B cell (primary cell): ENCODE measurements at regions of chr3 and their contacts with region 1.

Region 1: GRCh38 chr3:196969660-196970546 is 1.3 kb upstream of the PIGZ start:
- DNase-seq: peak; percentile 83
- ATAC-seq: peak; percentile 76
- H3K4me3 ChIP-seq: peak overlapping the region; percentile 46 to 82 (median 68)
- H3K4me3 Mint-ChIP-seq: peak overlapping the region; percentile 85
- H3K27ac ChIP-seq: no peak overlapping the region
- H3K27ac Mint-ChIP-seq: peak overlapping the region; percentile 81
- H3K4me1 ChIP-seq: peaks cover 5 to 11% of the 10 kb centered on the region in 2 donors
- H3K4me1 Mint-ChIP-seq: peaks cover 19% of the 10 kb centered on the region
- H3K27me3 ChIP-seq: peaks cover 0 to 4% (median 1%) of the 10 kb centered on the region in 4 experiments
- H3K27me3 Mint-ChIP-seq: peaks cover 9% of the 10 kb centered on the region
- CTCF ChIP-seq: peak; percentile 86

Region 2: GRCh38 chr3:196632046-196632751 is 337.7 kb before region 1 on chr3:
- CTCF ChIA-PET with region 1: no interaction called
- POLR2A ChIA-PET with region 1: no interaction called
- intact Hi-C with region 1: no loop called
- DNase-seq: peak; percentile 90
- ATAC-seq: peak; percentile 82
- H3K4me3 ChIP-seq: peak overlapping the region; percentile 60 to 78 (median 70)
- H3K4me3 Mint-ChIP-seq: peak overlapping the region; percentile 92
- H3K27ac ChIP-seq: peak overlapping the region; percentile 94 to 97
- H3K27ac Mint-ChIP-seq: peak overlapping the region; percentile 96
- H3K4me1 ChIP-seq: peaks cover 29 to 49% of the 10 kb centered on the region in 2 donors
- H3K4me1 Mint-ChIP-seq: peaks cover 52% of the 10 kb centered on the region
- H3K27me3 ChIP-seq: no peaks in the 10 kb centered on the region
- H3K27me3 Mint-ChIP-seq: no peaks in the 10 kb centered on the region
- CTCF ChIP-seq: peak; percentile 29

Region 3: DNA sequence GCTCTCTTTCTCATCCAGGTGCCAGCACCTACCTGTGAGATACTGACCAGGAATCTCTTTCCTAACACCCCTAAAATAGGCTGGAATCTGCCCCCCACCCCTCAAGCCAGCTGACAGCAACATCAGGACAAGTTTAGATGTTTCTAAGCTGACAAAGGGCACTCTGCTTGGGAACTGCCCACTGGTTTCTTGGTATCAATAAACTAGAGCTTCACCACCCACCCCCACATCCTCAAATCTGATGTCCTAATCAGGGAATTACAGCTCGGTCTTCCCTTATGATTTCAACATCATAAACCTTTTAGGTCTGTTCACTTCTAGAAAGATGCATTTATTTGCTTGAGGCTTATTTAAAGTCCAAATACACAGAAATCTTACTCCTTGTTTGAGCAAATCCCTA is 292.6 kb before region 1 on chr3:
- CTCF ChIA-PET with region 1: no interaction called
- POLR2A ChIA-PET with region 1: no interaction called
- intact Hi-C with region 1: no loop called
- DNase-seq: no peak
- ATAC-seq: no peak
- H3K4me3 ChIP-seq: no peak overlapping the region
- H3K4me3 Mint-ChIP-seq: no peak overlapping the region
- H3K27ac ChIP-seq: no peak overlapping the region
- H3K27ac Mint-ChIP-seq: no peak overlapping the region
- H3K4me1 ChIP-seq: peaks cover 5 to 15% of the 10 kb centered on the region in 2 donors
- H3K4me1 Mint-ChIP-seq: peaks cover 17% of the 10 kb centered on the region
- H3K27me3 ChIP-seq: no peaks in the 10 kb centered on the region
- H3K27me3 Mint-ChIP-seq: no peaks in the 10 kb centered on the region
- CTCF ChIP-seq: no peak

Region 4: DNA sequence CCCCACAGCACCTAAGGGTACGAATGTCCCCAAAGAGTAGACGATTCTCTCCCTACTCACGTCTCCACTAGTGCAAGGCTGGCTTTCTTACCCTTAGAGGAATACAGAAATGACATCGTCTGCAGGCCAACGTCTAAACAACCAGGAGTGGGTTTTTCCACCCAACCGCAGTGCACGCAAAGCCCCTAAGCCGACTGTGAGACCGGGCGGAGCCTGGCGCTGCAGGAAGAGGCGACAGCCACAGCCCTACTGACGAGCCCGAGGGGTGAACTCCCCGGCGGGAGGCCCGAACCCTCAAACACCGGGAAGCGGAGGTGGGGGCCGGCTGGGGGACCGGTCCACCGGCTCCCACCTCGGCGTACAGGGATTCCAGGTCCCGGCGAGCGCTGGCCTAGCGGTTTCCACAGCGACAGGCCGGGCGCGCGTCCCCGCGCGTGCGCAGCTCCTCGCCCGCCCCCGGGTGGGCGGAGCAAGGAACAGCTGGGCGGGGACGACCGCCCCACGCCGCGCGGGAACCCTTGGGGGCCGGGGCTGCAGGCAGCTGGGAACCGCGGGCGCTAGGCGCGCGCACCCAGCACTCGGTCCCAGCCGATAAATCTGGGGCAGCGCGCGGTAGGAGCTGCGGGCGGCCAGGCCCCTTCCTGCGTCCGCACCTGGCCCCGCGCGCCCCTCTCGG is 257.9 kb before region 1 on chr3 and contains the starts of genes CEP19 and PIGX:
- CTCF ChIA-PET with region 1: no interaction called
- POLR2A ChIA-PET with region 1: no interaction called
- intact Hi-C with region 1: loop called (anchors 1 kb)
- DNase-seq: peak; percentile 97
- ATAC-seq: peak; percentile 83
- H3K4me3 ChIP-seq: peak within 1 kb of the TSS; percentile 75 to 94 (median 87)
- H3K4me3 Mint-ChIP-seq: peak within 1 kb of the TSS; percentile 96
- H3K27ac ChIP-seq: peak within 1 kb of the TSS; percentile 91 to 96
- H3K27ac Mint-ChIP-seq: peak within 1 kb of the TSS; percentile 94
- H3K4me1 ChIP-seq: peaks cover 13 to 16% of the 10 kb centered on the region in 2 donors
- H3K4me1 Mint-ChIP-seq: peaks cover 14% of the 10 kb centered on the region
- H3K27me3 ChIP-seq: no peaks in the 10 kb centered on the region
- H3K27me3 Mint-ChIP-seq: no peaks in the 10 kb centered on the region
- CTCF ChIP-seq: no peak
- total RNA-seq, gene CEP19: 4.6 and 5.0 TPM in 2 replicates
- total RNA-seq, gene PIGX: 18.9 and 21.5 TPM in 2 replicates

Region 5: DNA sequence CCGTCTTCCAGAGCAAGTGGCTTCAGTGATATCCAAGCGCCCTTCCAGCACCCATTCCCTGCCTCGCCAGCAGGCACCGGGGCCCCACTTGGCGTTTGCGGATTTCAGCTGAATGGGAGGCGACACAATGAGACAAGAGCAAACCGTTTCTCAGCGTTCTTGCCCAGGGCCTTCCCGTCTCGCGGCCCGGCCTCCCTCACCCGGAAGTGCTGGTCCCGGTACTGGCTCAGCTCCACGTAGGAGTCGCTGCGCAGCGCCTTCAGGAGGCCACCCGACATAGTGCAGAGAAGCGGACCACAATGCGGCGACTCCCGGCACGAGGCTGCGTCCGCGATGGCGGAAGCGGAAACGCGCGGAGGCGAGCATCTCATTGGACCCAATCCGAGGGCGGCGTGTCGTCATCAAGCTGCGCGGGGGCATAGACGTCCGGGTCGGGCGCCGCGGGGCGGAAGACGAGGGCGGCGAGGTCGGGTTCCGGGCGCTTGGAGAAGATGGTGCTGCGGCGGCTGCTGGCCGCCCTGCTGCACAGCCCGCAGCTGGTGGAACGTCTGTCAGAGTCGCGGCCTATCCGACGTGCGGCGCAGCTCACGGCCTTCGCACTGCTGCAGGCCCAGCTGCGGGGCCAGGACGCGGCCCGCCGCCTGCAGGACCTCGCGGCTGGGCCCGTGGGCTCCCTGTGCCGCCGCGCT is 27.5 kb before region 1 on chr3 and contains the start of gene NCBP2:
- CTCF ChIA-PET with region 1: interaction called, 14 read pairs
- POLR2A ChIA-PET with region 1: interaction called, 8 read pairs
- intact Hi-C with region 1: loop called (anchors 2 kb)
- DNase-seq: peak; percentile 99
- ATAC-seq: peak; percentile 91
- H3K4me3 ChIP-seq: peak within 1 kb of the TSS; percentile 83 to 99 (median 92)
- H3K4me3 Mint-ChIP-seq: peak within 1 kb of the TSS; percentile 98
- H3K27ac ChIP-seq: peak within 1 kb of the TSS; percentile 92 to 97
- H3K27ac Mint-ChIP-seq: peak within 1 kb of the TSS; percentile 99
- H3K4me1 ChIP-seq: peaks cover 29 to 35% of the 10 kb centered on the region in 2 donors
- H3K4me1 Mint-ChIP-seq: peaks cover 50% of the 10 kb centered on the region
- H3K27me3 ChIP-seq: no peaks in the 10 kb centered on the region
- H3K27me3 Mint-ChIP-seq: no peaks in the 10 kb centered on the region
- CTCF ChIP-seq: peak; percentile 77
- total RNA-seq, gene NCBP2: 93.4 and 95.0 TPM in 2 replicates